ENCODE measurements at regions of chr12 and their contacts with region 1.

Region 1: GRCh38 chr12:132986001-132986912 is at the start of gene ZNF26:
- DNase-seq: peak; percentile 77 to 94 (median 84)
- ATAC-seq: peak; percentile 92 to 97
- H3K4me3 Mint-ChIP-seq: peak within 1 kb of the TSS; percentile 84 to 97 (median 94)
- H3K27ac Mint-ChIP-seq: peak within 1 kb of the TSS; percentile 96 to 98 (median 97)
- H3K4me1 Mint-ChIP-seq: peaks cover 22 to 39% (median 32%) of the 10 kb centered on the region in 4 donors
- H3K27me3 Mint-ChIP-seq: peaks cover 0 to 7% (median 5%) of the 10 kb centered on the region in 5 donors
- polyA plus RNA-seq, gene ZNF26: 10.6 to 19.2 (median 15.6) TPM

Region 2: DNA sequence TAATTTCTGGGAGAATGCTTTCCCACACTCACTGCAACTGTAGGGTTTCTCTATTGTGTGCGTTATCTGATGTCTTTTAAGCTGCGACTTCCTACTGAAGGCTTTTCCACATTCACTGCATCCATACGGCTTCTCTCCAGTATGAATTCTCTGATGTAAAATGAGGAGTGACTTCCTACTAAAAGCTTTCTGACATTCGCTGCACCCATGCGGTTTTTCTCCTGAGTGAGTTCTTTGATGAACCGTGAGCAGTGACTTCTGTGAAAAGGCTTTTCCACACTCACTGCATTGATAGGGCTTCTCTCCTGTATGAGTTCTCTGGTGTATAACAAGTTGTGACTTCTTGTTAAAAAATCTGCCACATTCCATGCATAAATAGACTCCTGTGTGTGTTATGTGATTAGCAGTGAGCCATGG is 59.8 kb before region 1 on chr12:
- POLR2A ChIA-PET with region 1: no interaction called
- DNase-seq: no peak
- ATAC-seq: no peak
- H3K4me3 Mint-ChIP-seq: no peak overlapping the region
- H3K27ac Mint-ChIP-seq: no peak overlapping the region
- H3K4me1 Mint-ChIP-seq: peaks cover 0 to 1% (median 0%) of the 10 kb centered on the region in 4 donors
- H3K27me3 Mint-ChIP-seq: no peaks in the 10 kb centered on the region

Region 3: DNA sequence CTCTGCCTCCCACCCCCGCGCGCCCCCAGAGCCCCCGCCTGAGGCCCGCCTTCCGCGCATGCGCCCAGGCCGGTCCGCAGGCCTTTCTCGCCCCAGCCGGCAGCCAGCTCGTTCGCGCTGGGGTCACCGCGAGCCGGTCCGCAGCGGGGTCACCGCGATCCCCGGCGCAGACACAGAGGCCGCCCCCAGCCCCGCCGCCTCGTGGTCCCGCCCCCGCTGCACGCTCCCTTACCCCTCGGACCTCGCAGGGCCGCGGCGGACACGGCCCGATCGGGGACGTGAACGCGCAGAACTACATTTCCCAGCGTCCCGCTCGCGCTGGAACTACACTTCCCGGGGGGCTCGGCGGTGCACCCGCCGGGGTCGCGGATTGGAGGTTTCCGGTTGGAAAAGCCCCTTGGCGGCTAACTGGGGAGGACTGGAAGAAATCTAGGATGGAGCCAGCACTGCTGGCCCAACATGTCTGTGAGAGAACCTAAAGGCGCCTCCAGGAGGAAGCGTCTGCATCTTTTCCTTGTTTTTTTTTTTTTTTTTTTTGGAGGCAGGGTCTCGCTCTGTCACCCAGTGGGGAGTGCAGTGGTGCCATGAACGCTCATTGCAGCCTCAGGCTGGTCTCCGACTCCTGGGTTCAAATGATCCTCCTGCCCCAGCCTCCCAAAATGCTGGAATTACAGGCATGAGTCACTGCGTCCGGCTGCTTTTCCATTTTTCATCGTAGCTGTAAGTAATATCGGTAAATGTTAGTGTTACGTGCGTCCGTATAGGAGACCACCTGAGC is 30.1 kb before region 1 on chr12 and contains the start of gene ZNF605:
- POLR2A ChIA-PET with region 1: interaction called, 13 read pairs
- DNase-seq: peak; percentile 78 to 90 (median 86)
- ATAC-seq: peak; percentile 93 to 96
- H3K4me3 Mint-ChIP-seq: peak within 1 kb of the TSS; percentile 92 to 98 (median 97)
- H3K27ac Mint-ChIP-seq: peak within 1 kb of the TSS; percentile 89 to 97 (median 95)
- H3K4me1 Mint-ChIP-seq: peaks cover 26 to 47% (median 39%) of the 10 kb centered on the region in 4 donors
- H3K27me3 Mint-ChIP-seq: no peaks in the 10 kb centered on the region
- polyA plus RNA-seq, gene ZNF605: 0.46 to 0.72 (median 0.65) TPM

Region 4: DNA sequence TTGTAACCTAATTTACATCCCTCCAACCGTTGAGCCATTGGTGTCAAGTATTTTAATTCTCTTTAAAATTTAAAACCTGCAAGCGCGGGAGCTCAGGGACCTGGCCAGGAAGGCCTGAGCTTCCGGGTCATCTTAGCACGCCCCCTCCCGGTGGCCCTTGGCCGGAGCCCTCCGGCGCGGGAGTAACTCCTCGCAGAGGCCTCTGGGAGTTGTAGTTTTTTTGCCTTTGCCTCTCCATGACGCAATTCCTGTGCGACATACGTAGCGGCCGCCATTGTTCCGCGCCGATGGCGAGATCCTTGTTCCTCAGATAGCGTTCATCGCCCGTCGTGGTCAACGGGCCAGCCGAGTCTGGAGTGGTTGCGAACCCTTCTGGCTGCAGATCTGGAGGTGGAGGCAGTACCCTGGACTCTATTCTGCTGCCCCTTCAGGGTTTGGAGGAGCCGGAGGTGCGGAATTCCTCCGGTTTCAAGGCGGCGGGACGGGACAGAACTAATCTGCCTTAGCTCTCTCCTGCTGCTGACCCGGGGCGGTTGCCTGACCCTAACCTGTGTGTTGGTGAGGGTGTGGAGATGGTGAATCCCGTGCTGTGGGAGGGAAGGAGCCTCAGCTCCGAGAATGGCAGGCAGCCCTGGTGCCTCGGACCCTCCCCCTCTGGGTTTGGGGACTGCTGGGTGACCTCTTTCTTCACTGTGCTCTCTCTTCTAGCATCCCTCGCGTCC is 195.1 kb after region 1 on chr12 and contains the start of gene ZNF268:
- POLR2A ChIA-PET with region 1: interaction called, 26 read pairs
- DNase-seq: peak; percentile 74 to 95 (median 86)
- ATAC-seq: peak; percentile 87 to 94
- H3K4me3 Mint-ChIP-seq: peak within 1 kb of the TSS; percentile 90 to 97 (median 94)
- H3K27ac Mint-ChIP-seq: peak within 1 kb of the TSS; percentile 89 to 97 (median 94)
- H3K4me1 Mint-ChIP-seq: peaks cover 18 to 30% (median 21%) of the 10 kb centered on the region in 4 donors
- H3K27me3 Mint-ChIP-seq: no peaks in the 10 kb centered on the region
- polyA plus RNA-seq, gene ZNF268: 15.3 to 18.3 (median 16.3) TPM

Measured in naive thymus-derived CD8-positive, alpha-beta T cell (primary cell).